ENCODE measurements at regions of chr2 and their contacts with region 1.

Region 1: GRCh38 chr2:177164584-177165052 is 48.0 kb upstream of the HNRNPA3 start:
- DNase-seq: peak; percentile 56 to 89
- H3K4me3 ChIP-seq: peak overlapping the region in 1 of 4 experiments; percentile 24; a peak in 1 of 8 replicates
- H3K27ac ChIP-seq: no peak overlapping the region; the same call in 1 of the 2 replicates
- H3K4me1 ChIP-seq: peaks cover 0 to 10% (median 1%) of the 10 kb centered on the region in 4 experiments; a peak in 4 of 7 replicates
- H3K27me3 ChIP-seq: no peaks in the 10 kb centered on the region
- CTCF ChIP-seq: peak; percentile 92 to 98 (median 95)
- EP300 ChIP-seq: no peak
- POLR2A ChIP-seq: no peak
- RAD21 ChIP-seq: peak; percentile 99

Region 2: DNA sequence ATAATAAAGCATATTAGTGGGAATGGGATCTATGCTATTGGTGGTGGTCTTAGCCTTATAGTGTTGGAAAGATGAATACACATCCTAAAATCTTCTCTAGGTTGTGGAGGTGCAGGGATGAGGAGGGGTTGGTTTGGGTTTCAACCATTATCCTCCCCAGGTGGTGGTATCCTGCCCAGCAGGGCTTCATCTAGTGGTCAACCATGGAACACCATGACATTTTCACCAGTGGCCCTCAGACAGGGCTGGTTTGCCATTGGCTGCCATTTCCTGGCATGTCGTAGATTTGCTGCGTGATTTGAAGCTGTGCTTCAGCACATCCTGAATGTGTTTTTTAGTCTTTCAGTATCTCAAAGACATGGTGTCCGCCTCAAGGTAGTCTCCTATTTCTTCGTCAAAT is 343.3 kb before region 1 on chr2:
- CTCF ChIA-PET with region 1: no interaction called
- POLR2A ChIA-PET with region 1: no interaction called
- DNase-seq: no peak
- H3K4me3 ChIP-seq: no peak overlapping the region
- H3K27ac ChIP-seq: no peak overlapping the region
- H3K4me1 ChIP-seq: peaks cover 4 to 19% (median 12%) of the 10 kb centered on the region in 4 experiments; a peak in 5 of 7 replicates
- H3K27me3 ChIP-seq: no peaks in the 10 kb centered on the region; a peak in 1 of 7 replicates
- CTCF ChIP-seq: no peak
- EP300 ChIP-seq: no peak
- POLR2A ChIP-seq: no peak
- RAD21 ChIP-seq: no peak

Region 3: DNA sequence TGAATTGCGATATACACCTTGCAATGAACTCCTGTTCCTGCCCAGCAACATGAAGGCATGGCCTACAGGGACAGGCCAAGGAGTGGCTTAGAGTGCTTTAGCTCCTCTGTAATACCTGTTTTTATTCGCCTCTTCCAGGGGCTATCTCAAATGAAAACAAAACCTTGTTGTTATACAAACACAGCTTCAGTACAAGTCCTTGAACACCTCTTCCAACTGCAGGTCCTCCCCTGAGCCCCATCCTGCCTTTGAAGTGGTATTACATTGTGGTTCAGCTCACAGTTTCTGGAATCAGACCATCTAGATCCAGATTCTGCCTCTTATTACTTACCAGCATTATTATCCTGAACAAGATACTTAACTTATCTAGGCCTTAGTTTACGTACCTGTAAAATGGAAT is 35.0 kb before region 1 on chr2:
- CTCF ChIA-PET with region 1: no interaction called
- POLR2A ChIA-PET with region 1: no interaction called
- DNase-seq: no peak
- H3K4me3 ChIP-seq: no peak overlapping the region
- H3K27ac ChIP-seq: no peak overlapping the region
- H3K4me1 ChIP-seq: 0 out of 7 replicates have a peak, but pooled peaks cover 0 to 2% (median 0%) of the 10 kb centered on the region in 4 experiments
- H3K27me3 ChIP-seq: no peaks in the 10 kb centered on the region
- CTCF ChIP-seq: no peak
- EP300 ChIP-seq: no peak
- POLR2A ChIP-seq: no peak
- RAD21 ChIP-seq: no peak

Region 4: DNA sequence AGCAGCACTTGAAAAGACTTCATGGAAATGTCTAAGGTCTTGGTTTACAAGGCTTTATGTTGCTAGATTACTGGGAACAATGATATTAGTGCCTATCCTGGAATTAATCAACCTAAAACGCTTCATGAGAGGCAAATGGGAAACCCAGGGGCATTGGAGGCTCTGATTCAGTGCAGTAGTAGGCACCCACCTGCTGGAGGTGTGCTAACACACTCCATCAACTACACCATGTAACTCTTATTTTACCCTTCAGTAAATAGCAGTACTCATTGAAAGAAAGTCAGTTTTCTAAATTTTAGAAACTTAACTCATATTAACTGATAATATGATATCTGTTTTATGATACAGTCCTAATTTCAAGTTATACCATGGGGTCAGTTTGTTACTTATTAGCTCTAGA is 30.6 kb after region 1 on chr2:
- CTCF ChIA-PET with region 1: interaction called, 107 read pairs
- POLR2A ChIA-PET with region 1: interaction called, 3 read pairs
- DNase-seq: no peak
- H3K4me3 ChIP-seq: no peak overlapping the region
- H3K27ac ChIP-seq: no peak overlapping the region
- H3K4me1 ChIP-seq: no peaks in the 10 kb centered on the region
- H3K27me3 ChIP-seq: no peaks in the 10 kb centered on the region
- CTCF ChIP-seq: peak; percentile 34 to 54 (median 37); a peak in 3 of 4 replicates
- EP300 ChIP-seq: no peak
- POLR2A ChIP-seq: no peak
- RAD21 ChIP-seq: peak; percentile 54 to 56

Region 5: GRCh38 chr2:177229448-177230242 is 65.0 kb after region 1 on chr2:
- CTCF ChIA-PET with region 1: interaction called, 12 read pairs
- POLR2A ChIA-PET with region 1: interaction called, 21 read pairs
- DNase-seq: no peak
- H3K4me3 ChIP-seq: no peak overlapping the region
- H3K27ac ChIP-seq: no peak overlapping the region
- H3K4me1 ChIP-seq: no peaks in the 10 kb centered on the region
- H3K27me3 ChIP-seq: no peaks in the 10 kb centered on the region
- CTCF ChIP-seq: no peak
- EP300 ChIP-seq: no peak
- POLR2A ChIP-seq: no peak
- RAD21 ChIP-seq: no peak

Region 6: GRCh38 chr2:177263451-177264208 is 99.0 kb after region 1 on chr2:
- CTCF ChIA-PET with region 1: interaction called, 32 read pairs
- POLR2A ChIA-PET with region 1: interaction called, 23 read pairs
- DNase-seq: peak; percentile 44 to 88
- H3K4me3 ChIP-seq: peak overlapping the region; percentile 71 to 82 (median 78)
- H3K27ac ChIP-seq: peak overlapping the region; percentile 78; the same call in 1 of the 2 replicates
- H3K4me1 ChIP-seq: peaks cover 0 to 2% (median 2%) of the 10 kb centered on the region in 4 experiments; a peak in 3 of 7 replicates
- H3K27me3 ChIP-seq: no peaks in the 10 kb centered on the region
- CTCF ChIP-seq: peak; percentile 47 to 57 (median 50); a peak in 3 of 4 replicates
- EP300 ChIP-seq: no peak; a peak in 1 of 3 replicates
- POLR2A ChIP-seq: peak; percentile 34 to 73
- RAD21 ChIP-seq: peak; percentile 31 to 55

Region 7: GRCh38 chr2:177332041-177332991 is 167.7 kb after region 1 on chr2:
- CTCF ChIA-PET with region 1: interaction called, 43 read pairs
- POLR2A ChIA-PET with region 1: interaction called, 10 read pairs
- DNase-seq: no peak
- H3K4me3 ChIP-seq: peak overlapping the region in 1 of 4 experiments; percentile 31; a peak in 1 of 8 replicates
- H3K27ac ChIP-seq: no peak overlapping the region
- H3K4me1 ChIP-seq: peaks cover 0 to 7% (median 3%) of the 10 kb centered on the region in 4 experiments; a peak in 3 of 7 replicates
- H3K27me3 ChIP-seq: no peaks in the 10 kb centered on the region
- CTCF ChIP-seq: peak in 2 of 3 experiments; percentile 62 to 70; a peak in 3 of 4 replicates
- EP300 ChIP-seq: peak in 1 of 2 experiments; percentile 63; a peak in 1 of 3 replicates
- POLR2A ChIP-seq: no peak
- RAD21 ChIP-seq: peak; percentile 82 to 83

Measured in H1 (cell line).